ENCODE measurements at regions of chr5 and their contacts with region 1.

Region 1: GRCh38 chr5:175663186-175664184 is 5.6 kb downstream of the HRH2 start:
- DNase-seq: peak; percentile 86

Region 2: GRCh38 chr5:175681045-175681967 is 17.8 kb after region 1 on chr5:
- intact Hi-C with region 1: loop called (anchors 2 kb)
- DNase-seq: peak; percentile 74

Region 3: DNA sequence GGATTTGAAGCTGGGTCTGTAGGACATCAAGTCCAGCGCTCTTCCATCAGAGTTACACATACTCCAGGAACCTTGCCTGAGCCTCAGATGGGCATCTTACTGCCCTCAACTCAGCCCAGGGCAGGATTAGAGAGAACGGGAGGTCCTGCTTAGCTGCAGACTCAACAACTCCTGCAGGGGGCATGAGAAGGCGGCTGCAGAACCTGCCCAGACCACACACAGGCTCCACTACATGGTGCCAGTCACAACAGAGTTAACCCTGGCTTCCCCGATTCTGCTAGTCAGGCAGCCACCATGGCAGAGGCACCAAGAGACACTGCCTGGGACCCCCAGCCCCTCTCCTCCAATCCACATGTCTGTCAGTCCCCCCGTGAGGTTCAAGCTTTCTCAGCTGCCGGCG is 184.0 kb after region 1 on chr5:
- intact Hi-C with region 1: no loop called
- DNase-seq: no peak

Region 4: DNA sequence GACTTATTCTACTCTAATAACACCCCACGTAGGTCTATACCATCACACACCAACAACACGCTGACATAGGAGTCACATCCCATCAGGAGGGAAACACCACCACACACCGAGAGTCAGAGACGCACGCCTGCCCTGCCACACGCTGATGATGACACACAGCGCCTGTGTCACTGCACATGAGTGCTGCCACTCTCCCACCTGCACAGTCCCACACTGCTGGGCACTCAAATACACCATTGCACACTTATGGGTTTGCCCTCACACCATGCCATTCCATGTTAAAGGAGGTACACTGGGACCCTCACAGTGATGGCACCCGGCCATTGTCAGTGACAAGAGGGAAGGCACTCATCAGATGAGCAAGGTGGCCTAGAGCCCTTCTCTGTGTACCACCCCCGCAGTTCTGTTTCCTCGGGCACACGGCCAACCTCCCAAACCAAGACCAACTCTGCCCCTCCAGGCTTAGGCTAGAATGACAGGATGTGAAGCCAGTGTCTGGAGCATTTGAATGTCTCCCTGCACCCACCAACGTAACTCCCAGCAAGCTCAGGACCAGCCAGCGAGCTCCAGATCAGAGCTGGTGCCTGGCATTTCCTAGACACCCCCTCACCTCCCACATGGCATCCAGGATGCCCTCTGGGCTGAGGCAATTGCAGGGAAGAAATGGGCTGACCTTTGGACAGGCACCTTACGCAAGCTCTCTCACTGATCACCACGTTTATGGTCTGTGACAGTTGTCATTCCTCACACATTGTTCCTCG is 204.3 kb after region 1 on chr5:
- intact Hi-C with region 1: no loop called
- DNase-seq: no peak